Activated T-helper 2 cell treated with anti-CD3 and anti-CD28 coated beads, Interferon-gamma antibody, Interleukin-2, Interleukin-4, amounts not matched to agents 10 μg/mL and 5 μg/mL and 100 μg/mL, durations not matched to agents 14 hours and 24 hours and 36 hours (primary cell): ENCODE measurements at regions of chrX and their contacts with region 1.

Region 1: GRCh38 chrX:21374163-21374993 is at the start of gene CNKSR2:
- DNase-seq: peak; percentile 64
- H3K4me3 Mint-ChIP-seq: peak within 1 kb of the TSS; percentile 89
- H3K27ac Mint-ChIP-seq: peak within 1 kb of the TSS; percentile 72
- H3K4me1 Mint-ChIP-seq: peaks cover 31% of the 10 kb centered on the region
- H3K27me3 Mint-ChIP-seq: no peaks in the 10 kb centered on the region
- total RNA-seq, gene CNKSR2: 11.3 and 13.4 TPM in 2 replicates

Region 2: GRCh38 chrX:21276736-21277685 is 97.4 kb before region 1 on chrX:
- intact Hi-C with region 1: no loop called
- DNase-seq: no peak
- H3K4me3 Mint-ChIP-seq: no peak overlapping the region
- H3K27ac Mint-ChIP-seq: no peak overlapping the region
- H3K4me1 Mint-ChIP-seq: no peaks in the 10 kb centered on the region
- H3K27me3 Mint-ChIP-seq: no peaks in the 10 kb centered on the region

Region 3: DNA sequence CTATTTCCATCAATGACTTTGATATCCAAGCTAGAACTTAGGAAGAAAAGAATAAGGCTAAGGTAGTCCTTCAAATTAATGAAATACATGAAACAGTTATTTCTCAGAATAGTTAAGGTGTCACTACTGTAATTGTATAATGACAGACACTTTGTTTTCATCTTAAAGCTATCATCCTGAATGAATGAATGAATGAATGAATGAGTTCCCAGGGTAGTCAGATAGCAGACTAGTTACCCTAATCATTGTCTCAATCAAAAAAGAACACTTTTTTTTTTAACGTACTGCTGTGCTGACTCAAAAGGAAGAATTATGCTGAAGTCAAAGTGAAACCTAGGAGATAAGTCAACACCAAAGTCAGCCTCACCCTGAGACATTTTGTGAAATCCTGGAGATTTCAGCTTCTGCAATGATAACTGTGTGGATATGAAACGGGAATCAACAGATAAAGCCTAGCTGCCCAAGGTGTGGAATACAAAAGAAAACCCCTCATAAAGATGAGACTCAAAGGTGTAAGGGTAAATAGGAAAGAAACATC is 68.5 kb before region 1 on chrX:
- intact Hi-C with region 1: loop called (anchors 10 kb)
- DNase-seq: no peak
- H3K4me3 Mint-ChIP-seq: no peak overlapping the region
- H3K27ac Mint-ChIP-seq: peak overlapping the region; percentile 55
- H3K4me1 Mint-ChIP-seq: peaks cover 15% of the 10 kb centered on the region
- H3K27me3 Mint-ChIP-seq: no peaks in the 10 kb centered on the region

Region 4: GRCh38 chrX:21438792-21439191 is 64.4 kb after region 1 on chrX:
- intact Hi-C with region 1: loop called (anchors 5 kb)
- DNase-seq: no peak
- H3K4me3 Mint-ChIP-seq: peak overlapping the region; percentile 67
- H3K27ac Mint-ChIP-seq: peak overlapping the region; percentile 92
- H3K4me1 Mint-ChIP-seq: peaks cover 15% of the 10 kb centered on the region
- H3K27me3 Mint-ChIP-seq: no peaks in the 10 kb centered on the region